Activated CD4-positive, alpha-beta memory T cell treated with anti-CD3 and anti-CD28 coated beads for 36 hours (primary cell): ENCODE measurements at regions of chr1 and their contacts with region 1.

Region 1: GRCh38 chr1:211698161-211699026 is 23.0 kb upstream of the NEK2 start:
- DNase-seq: peak; percentile 90
- H3K4me3 Mint-ChIP-seq: peak overlapping the region; percentile 22
- H3K27ac Mint-ChIP-seq: no peak overlapping the region
- H3K4me1 Mint-ChIP-seq: peaks cover 16% of the 10 kb centered on the region
- H3K27me3 Mint-ChIP-seq: no peaks in the 10 kb centered on the region

Region 2: GRCh38 chr1:211305044-211305443 is 393.4 kb before region 1 on chr1:
- CTCF ChIA-PET with region 1: no interaction called
- POLR2A ChIA-PET with region 1: no interaction called
- intact Hi-C with region 1: no loop called
- DNase-seq: peak; percentile 76
- H3K4me3 Mint-ChIP-seq: no peak overlapping the region
- H3K27ac Mint-ChIP-seq: peak overlapping the region; percentile 77
- H3K4me1 Mint-ChIP-seq: peaks cover 44% of the 10 kb centered on the region
- H3K27me3 Mint-ChIP-seq: no peaks in the 10 kb centered on the region

Region 3: GRCh38 chr1:211625040-211625439 is 73.4 kb before region 1 on chr1:
- CTCF ChIA-PET with region 1: no interaction called
- POLR2A ChIA-PET with region 1: no interaction called
- intact Hi-C with region 1: no loop called
- DNase-seq: peak; percentile 30
- H3K4me3 Mint-ChIP-seq: no peak overlapping the region
- H3K27ac Mint-ChIP-seq: no peak overlapping the region
- H3K4me1 Mint-ChIP-seq: peaks cover 16% of the 10 kb centered on the region
- H3K27me3 Mint-ChIP-seq: no peaks in the 10 kb centered on the region

Region 4: DNA sequence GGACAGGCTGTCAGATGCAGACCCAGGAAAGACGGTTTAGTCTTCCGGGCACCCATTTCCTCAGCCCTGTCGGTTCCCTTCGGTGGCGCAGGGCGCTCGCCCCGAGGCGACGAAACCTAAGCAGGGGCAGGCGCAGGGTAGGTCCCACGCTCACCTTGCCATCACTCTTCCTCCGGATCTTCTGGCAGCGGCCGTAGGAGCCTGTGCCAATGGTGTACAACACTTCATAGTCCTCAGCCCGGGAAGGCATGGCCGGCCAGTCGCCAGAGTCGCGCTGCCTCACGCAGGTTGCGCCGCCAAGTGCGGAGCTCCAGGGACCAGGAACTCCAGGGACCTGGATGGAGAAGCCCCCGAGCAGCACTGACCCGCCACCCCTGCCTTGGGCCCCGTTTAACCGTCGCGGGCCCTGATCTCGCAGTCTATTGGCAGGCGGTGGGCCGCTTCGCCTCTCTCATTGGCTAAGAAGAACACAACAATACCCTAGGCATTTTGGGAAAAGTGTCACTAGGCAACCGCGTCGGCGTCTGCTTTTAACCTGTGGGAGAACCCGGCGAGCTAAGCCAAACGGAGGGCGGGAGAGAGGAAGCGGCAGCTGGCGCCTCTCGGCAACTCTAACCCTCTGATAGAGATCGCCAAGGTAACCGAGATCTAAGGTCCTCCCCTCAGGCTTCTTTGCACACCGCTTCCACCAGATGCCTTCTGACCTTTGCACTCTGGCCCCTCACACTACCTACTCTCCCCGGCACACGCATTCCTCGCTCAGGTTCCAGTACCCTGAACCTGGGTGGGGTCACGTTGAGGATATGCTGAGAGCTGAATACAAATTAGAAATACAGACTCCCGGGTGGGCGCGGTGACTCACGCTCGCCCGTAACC is 22.9 kb before region 1 on chr1 and contains the start of gene NEK2:
- CTCF ChIA-PET with region 1: interaction called, 50 read pairs
- POLR2A ChIA-PET with region 1: no interaction called
- intact Hi-C with region 1: no loop called
- DNase-seq: peak; percentile 94
- H3K4me3 Mint-ChIP-seq: peak within 1 kb of the TSS; percentile 80
- H3K27ac Mint-ChIP-seq: peak within 1 kb of the TSS; percentile 79
- H3K4me1 Mint-ChIP-seq: peaks cover 12% of the 10 kb centered on the region
- H3K27me3 Mint-ChIP-seq: no peaks in the 10 kb centered on the region
- total RNA-seq, gene NEK2: 42.4 to 45.9 TPM

Region 5: DNA sequence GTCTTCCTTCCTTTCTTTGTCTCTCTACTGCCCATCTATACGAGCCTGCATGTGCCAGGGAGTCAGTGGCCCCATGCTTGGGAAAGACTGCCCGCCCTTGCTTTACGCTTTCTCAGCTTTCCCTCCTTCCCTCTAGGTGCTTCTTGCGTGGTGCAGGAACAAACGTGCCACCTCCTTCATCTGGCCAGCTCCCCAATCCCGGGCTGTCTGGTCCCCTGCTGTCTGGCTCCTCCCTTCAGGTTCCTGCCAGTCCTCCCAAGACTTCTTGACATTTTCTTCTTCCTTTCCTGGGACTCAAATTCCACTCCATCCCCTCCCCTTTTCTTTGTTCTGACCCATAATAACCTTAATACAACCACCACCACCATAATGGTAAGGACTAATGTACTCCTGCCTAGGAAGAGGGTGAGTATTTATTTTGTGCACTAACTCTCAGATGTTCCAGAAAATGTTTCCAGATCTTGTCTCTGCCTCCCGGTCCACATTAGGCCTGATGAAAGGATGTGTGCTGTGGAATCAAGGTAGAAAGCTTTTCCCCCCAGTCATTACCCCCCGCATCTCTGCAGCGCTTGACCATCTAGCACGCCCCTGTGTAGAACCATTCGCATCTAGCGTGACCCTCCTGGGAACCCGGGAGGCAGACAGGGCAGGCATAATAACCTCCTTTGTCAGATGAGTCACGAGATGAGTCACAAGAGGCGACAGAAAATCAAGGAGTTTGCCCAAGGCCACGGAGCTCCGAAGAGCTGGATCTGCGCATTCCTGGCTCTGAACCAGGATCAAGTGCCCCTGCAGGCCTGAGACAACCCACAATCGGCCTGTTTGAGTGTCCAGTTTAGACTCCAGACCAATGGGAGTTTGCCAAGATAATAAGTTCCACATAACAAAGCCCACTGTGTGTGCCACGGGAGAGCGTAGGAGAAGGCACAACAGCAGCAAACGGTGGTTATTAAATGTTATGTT is 37.1 kb after region 1 on chr1:
- CTCF ChIA-PET with region 1: interaction called, 10 read pairs
- POLR2A ChIA-PET with region 1: no interaction called
- intact Hi-C with region 1: loop called (anchors 2 kb)
- DNase-seq: no peak
- H3K4me3 Mint-ChIP-seq: no peak overlapping the region
- H3K27ac Mint-ChIP-seq: no peak overlapping the region
- H3K4me1 Mint-ChIP-seq: peaks cover 29% of the 10 kb centered on the region
- H3K27me3 Mint-ChIP-seq: no peaks in the 10 kb centered on the region

Region 6: GRCh38 chr1:211830330-211831142 is 132.1 kb after region 1 on chr1 and contains the start of gene LPGAT1:
- CTCF ChIA-PET with region 1: interaction called, 10 read pairs
- POLR2A ChIA-PET with region 1: no interaction called
- intact Hi-C with region 1: loop called (anchors 1 kb)
- DNase-seq: peak; percentile 77
- H3K4me3 Mint-ChIP-seq: peak within 1 kb of the TSS; percentile 86
- H3K27ac Mint-ChIP-seq: peak within 1 kb of the TSS; percentile 83
- H3K4me1 Mint-ChIP-seq: peaks cover 61% of the 10 kb centered on the region
- H3K27me3 Mint-ChIP-seq: no peaks in the 10 kb centered on the region
- total RNA-seq, gene LPGAT1: 31.8 to 34.7 TPM

Region 7: GRCh38 chr1:211939876-211940468 is 241.6 kb after region 1 on chr1:
- CTCF ChIA-PET with region 1: interaction called, 6 read pairs
- POLR2A ChIA-PET with region 1: no interaction called
- intact Hi-C with region 1: loop called (anchors 5 kb)
- DNase-seq: peak; percentile 81
- H3K4me3 Mint-ChIP-seq: no peak overlapping the region
- H3K27ac Mint-ChIP-seq: no peak overlapping the region
- H3K4me1 Mint-ChIP-seq: peaks cover 44% of the 10 kb centered on the region
- H3K27me3 Mint-ChIP-seq: no peaks in the 10 kb centered on the region